ENCODE measurements at regions of chr7 and their contacts with region 1.

Region 1: DNA sequence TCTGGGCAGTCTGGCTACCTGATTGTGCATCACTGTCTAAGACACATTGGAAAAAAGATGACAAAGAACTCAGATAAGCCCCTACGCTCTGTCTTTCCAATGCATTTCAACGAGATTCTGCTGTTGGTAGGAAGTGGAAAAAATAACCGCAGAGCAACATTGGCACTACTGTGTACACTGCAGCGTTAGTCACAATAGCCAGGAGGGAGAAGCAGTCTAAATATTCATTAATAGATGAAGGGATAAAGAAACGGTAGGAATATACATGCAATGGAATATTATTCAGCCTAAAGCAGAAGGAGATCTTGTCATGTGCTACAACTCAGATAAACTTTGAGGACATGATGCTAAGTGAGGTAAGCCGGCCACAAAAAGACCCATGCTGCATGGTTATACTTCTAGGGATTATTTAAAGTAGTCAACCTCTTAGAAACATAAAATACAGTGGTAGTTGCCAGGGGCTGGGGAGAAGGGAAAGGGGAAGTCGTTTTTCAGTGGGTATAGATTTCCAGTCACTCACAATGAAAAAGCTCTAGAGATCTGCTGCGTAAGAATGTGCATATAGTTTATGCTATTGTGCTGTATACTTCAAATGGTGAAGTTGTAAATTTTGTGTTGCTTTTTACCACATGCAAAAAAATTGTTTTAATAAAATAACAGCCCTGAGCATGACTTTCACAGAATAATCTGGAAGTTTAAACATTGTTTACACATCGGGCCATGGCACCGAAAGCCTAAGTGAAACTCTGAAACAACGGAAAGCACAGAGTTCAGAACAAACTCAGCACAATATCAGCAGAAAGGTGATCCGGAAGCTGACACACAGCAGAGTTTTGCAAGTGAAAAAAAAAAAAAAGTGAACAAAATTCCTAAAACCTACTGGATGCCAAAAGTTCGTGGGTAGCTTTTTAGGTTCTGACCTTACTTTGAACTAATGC is 40.1 kb downstream of the ELMO1 start:
- DNase-seq: peak; percentile 73
- H3K4me3 ChIP-seq: peak overlapping the region in 1 of 3 experiments; percentile 49
- H3K27ac ChIP-seq: no peak overlapping the region
- H3K4me1 ChIP-seq: peaks cover 18% of the 10 kb centered on the region
- H3K27me3 ChIP-seq: no peaks in the 10 kb centered on the region
- CTCF ChIP-seq: no peak
- POLR2A ChIP-seq: no peak

Region 2: DNA sequence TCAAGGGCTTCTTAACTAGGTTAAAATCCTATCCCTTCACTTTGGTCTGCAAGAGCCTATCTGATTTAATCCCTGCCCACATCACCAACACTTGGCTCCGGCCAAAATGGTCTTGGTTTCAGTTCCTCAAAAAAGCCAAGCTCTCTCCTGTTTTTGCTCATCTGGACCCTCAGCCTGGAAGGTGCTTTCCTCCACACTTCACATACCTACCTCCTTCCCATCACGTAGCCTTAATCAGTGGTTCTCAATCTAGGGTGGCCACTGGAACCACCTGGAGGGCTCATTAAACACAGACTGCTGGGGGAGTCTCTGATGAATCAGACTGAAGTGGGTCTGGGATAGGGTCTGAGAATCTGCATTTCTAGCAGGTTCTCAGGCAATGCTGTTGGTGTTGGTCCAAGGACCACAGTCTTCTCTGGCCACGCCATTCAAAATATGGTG is 457.3 kb before region 1 on chr7:
- CTCF ChIA-PET with region 1: no interaction called
- POLR2A ChIA-PET with region 1: no interaction called
- dilution Hi-C with region 1: no loop called
- intact Hi-C with region 1: no loop called
- DNase-seq: no peak
- H3K4me3 ChIP-seq: no peak overlapping the region
- H3K27ac ChIP-seq: no peak overlapping the region
- H3K4me1 ChIP-seq: no peaks in the 10 kb centered on the region
- H3K27me3 ChIP-seq: no peaks in the 10 kb centered on the region
- CTCF ChIP-seq: no peak
- POLR2A ChIP-seq: no peak

Region 3: DNA sequence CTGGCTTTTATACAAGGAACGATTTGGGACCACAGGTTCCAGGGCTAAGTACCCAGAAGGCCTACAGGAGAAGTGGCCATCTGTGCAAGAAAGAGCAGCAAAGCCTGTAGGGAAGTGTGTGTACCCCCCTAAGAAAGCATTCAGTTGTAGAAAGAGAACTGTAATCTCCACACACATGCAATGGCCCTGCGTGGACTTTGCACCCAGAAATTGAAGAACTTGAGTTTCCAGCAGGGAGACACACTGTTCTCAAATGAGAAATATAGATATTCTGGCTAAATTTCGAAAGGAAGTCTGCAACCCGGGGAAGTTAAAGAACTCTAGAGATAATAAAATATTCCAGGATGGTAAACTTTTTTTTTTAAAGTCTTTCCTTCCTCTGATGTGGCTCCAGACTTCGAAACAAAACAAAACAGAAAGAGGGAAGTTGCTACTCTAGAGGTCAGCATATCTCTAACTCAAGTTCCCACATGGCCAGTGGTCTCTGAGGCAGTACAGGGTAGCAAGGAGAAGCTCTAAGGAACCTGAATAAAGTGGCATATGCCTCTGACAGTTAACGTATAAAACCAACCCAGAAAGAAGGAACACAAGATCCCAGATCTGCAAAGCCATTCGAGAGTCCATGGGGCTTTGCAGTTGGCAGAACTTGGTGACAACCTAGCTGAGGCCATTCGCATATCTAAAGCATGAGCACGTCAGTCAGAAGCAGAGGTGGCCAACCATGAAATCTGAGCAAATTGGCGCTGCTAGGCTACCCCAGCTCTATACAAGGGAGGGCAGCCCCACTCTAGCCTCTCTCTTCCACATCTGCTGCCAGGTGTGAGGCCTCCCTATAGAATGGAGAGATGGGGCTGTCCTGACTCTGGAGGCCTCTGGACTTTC is 16.5 kb before region 1 on chr7:
- CTCF ChIA-PET with region 1: no interaction called
- POLR2A ChIA-PET with region 1: interaction called, 4 read pairs
- dilution Hi-C with region 1: no loop called
- intact Hi-C with region 1: loop called (anchors 2 kb)
- DNase-seq: peak; percentile 81
- H3K4me3 ChIP-seq: no peak overlapping the region
- H3K27ac ChIP-seq: no peak overlapping the region
- H3K4me1 ChIP-seq: peaks cover 12% of the 10 kb centered on the region
- H3K27me3 ChIP-seq: no peaks in the 10 kb centered on the region
- CTCF ChIP-seq: no peak
- POLR2A ChIP-seq: no peak